PC-3 (cell line): ENCODE measurements at regions of chr1 and their contacts with region 1.

Region 1: GRCh38 chr1:84781946-84782771 is 91.9 kb upstream of the SSX2IP start:
- DNase-seq: peak; percentile 40
- ATAC-seq: no peak
- H3K4me3 ChIP-seq: no peak overlapping the region
- H3K27ac ChIP-seq: no peak overlapping the region
- H3K4me1 ChIP-seq: peaks cover 33% of the 10 kb centered on the region
- H3K27me3 ChIP-seq: no peaks in the 10 kb centered on the region
- CTCF ChIP-seq: peak; percentile 70

Region 2: DNA sequence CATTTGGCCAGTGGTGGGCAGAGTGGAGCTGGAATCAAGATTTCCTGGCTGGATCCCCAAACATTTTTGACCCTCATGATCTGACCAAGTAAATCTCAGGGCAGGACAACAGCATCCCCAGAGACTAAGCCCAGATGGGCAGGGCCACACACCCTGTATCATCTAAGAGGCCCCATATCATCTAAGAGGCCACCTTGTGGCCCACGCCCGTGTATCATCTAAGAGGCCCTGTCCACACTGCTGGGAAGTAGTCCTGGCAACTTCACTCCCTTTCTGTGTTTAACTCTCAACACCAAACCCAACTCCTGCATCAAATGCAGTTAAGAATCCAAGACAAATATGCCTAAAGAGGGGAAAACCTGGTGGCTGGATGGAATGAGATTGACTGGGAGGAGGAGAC is 10.3 kb before region 1 on chr1:
- CTCF ChIA-PET with region 1: no interaction called
- POLR2A ChIA-PET with region 1: no interaction called
- intact Hi-C with region 1: no loop called
- DNase-seq: no peak
- ATAC-seq: no peak
- H3K4me3 ChIP-seq: no peak overlapping the region
- H3K27ac ChIP-seq: no peak overlapping the region
- H3K4me1 ChIP-seq: peaks cover 43% of the 10 kb centered on the region
- H3K27me3 ChIP-seq: no peaks in the 10 kb centered on the region
- CTCF ChIP-seq: no peak

Region 3: DNA sequence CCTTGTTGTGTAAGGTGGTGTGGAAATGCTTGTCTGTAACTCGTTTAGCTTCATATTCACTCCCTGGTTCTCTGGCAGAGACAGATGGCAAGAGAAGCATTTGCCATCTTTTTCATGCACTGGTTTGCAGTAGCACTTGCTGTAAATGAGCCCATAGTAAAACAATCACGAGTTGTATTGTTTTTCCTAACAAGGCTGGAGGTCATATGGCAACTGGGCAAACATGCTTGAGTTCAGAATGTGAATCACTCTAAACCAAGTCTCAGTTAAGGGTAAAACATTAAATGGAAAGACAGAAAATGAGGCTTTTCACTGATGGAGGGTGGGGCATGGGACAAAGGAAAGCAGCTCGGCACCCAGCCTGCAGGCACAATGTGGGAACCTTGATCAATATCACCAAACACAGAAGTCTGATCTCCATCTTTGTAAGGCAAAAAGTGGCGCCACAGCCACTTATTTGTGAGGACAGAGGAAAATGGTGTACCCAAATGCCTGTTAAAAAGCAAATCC is 137.4 kb after region 1 on chr1:
- CTCF ChIA-PET with region 1: no interaction called
- POLR2A ChIA-PET with region 1: interaction called, 16 read pairs
- intact Hi-C with region 1: no loop called
- DNase-seq: no peak
- ATAC-seq: no peak
- H3K4me3 ChIP-seq: no peak overlapping the region
- H3K27ac ChIP-seq: no peak overlapping the region
- H3K4me1 ChIP-seq: no peaks in the 10 kb centered on the region
- H3K27me3 ChIP-seq: no peaks in the 10 kb centered on the region
- CTCF ChIP-seq: no peak